ENCODE measurements at regions of chr17 and their contacts with region 1.

Region 1: GRCh38 chr17:8409966-8410864 is 12.6 kb upstream of the RNF222 start:
- DNase-seq: peak; percentile 92
- ATAC-seq: peak; percentile 88
- H3K4me3 Mint-ChIP-seq: no peak overlapping the region
- H3K27ac Mint-ChIP-seq: no peak overlapping the region
- H3K4me1 Mint-ChIP-seq: peaks cover 14% of the 10 kb centered on the region
- H3K27me3 Mint-ChIP-seq: peaks cover 2% of the 10 kb centered on the region; the same call in 1 of the 2 replicates
- CTCF ChIP-seq: peak; percentile 90

Region 2: DNA sequence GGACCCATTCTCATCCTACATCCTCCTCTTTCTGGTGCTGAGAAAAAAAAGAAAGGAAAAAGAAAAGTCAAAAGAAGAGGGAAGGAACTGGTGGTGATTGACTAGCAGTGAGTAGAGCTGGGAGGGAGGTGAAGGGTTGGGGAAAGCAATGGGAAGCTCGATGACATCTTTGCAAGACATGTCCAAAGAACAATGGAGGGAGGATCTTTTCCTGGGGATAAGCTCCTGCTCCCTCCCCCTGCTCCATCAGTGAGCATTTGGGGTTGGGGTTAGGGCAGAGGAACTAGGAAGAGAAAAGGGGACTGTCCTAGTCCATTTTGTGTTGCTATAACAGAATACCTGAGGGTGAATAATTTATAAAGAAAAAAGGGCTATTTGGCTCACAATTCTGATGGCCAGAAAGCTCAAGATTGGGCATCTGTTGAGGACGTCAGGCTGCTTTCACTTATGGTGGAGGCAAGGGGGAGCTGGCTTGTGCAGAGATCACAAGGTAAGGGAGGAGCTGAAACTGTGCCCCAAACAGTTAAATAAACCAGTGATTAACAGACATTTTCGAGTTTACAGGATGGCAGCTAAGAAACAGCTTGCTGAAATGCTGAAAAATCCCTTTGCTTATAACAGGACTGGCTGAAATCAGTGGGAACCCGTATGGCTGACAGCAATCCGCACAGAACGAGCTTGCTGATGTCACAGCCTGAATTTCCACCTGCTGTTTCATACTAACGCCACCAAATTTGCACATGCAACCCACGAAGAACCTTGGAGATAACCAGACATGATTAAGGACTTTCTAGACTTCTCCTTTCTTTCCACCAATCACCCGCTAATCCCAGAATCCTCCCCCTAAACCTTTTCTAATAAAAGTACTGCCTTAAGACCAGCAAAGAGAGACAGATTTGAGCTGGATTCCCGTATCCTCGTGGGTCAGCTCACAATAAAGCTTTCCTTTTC is 72.1 kb before region 1 on chr17:
- CTCF ChIA-PET with region 1: interaction called, 12 read pairs
- POLR2A ChIA-PET with region 1: no interaction called
- DNase-seq: no peak
- ATAC-seq: no peak
- H3K4me3 Mint-ChIP-seq: no peak overlapping the region
- H3K27ac Mint-ChIP-seq: peak overlapping the region; percentile 60
- H3K4me1 Mint-ChIP-seq: peaks cover 19% of the 10 kb centered on the region
- H3K27me3 Mint-ChIP-seq: no peaks in the 10 kb centered on the region
- CTCF ChIP-seq: no peak

Region 3: DNA sequence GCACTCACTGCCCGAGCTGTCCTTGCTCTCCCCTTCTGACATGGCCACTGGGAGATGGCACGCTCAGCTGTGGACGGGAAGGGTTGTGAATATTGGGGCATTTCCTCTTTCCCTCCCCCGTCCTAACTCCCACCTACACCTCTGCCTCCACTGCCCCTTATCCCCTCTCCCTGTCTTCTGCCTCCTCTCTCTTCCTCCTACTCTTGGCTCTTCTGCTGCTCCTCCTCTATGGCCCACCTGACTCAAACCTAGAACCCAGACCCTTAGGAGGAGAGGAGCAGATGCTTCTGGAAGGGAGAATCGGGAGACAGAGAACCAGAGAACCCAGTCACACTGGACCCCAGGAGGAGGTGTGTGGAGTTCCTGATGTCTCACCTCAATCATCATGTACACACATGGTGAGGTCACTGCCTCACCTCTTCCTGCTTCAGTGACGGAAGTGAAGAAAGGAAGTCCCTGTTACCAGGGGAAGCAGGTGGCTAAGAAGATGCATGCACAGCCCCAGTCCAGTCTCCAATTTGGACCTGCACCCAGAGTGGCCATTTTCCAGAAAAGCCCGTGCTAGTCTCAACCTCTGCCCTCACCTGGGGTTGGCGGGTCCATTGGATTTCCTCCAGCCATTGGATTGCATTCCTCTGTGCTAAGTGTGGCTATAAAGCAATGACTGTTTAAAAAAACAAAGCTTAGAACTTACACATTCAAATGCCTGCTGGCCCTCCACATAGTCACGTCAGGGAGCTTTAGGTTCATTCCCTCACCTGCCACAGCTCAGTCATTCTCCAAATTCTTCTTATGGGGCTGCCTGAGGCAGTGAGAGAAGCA is 16.6 kb before region 1 on chr17:
- CTCF ChIA-PET with region 1: interaction called, 16 read pairs
- POLR2A ChIA-PET with region 1: no interaction called
- DNase-seq: no peak
- ATAC-seq: no peak
- H3K4me3 Mint-ChIP-seq: no peak overlapping the region
- H3K27ac Mint-ChIP-seq: no peak overlapping the region
- H3K4me1 Mint-ChIP-seq: peaks cover 8% of the 10 kb centered on the region
- H3K27me3 Mint-ChIP-seq: peaks cover 13% of the 10 kb centered on the region
- CTCF ChIP-seq: no peak

Region 4: DNA sequence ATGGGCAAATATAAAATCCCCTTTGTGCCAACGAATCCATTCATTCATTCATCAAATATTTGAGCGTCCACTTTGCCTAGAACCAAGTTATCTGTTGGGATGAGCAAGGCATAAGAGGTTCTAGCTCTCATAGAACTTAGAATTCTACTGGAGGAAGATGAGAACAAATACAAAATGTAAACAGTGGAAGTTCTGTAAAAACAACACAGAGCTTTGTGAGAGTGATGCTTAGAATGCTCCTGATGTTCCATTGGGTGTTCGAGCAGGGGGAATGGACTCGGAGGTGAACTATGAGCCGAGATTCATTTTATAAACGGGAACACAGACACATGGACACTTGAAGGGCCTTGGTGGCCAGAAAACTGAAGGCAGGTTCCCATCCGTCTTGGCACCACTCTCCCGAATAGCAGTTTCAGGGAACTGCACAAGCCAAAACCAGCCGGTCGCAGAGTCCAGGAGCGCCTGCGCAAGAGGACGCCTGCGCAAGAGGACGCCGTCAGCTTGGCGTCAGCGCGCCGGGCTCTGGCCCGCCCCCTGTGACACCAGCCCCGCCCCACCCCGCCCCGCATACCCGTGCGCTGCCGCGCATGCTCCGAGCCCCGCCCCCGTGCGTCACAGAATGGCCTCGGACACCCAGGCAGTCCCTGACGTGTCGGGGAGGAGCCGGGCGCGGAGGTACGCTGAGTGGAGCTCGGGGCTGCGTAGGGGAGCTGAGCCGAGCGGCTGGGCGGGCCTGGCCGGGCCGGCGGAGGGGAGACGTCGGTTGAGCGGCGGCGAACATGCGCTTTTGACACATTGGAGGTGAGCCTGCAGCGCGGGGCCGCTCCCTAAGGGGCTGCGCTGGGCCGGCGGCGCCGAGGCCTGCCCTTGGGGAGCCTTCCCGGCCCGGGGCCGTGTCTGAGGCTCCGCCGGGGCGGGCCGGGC is 25.3 kb after region 1 on chr17 and contains the start of gene NDEL1:
- CTCF ChIA-PET with region 1: interaction called, 21 read pairs
- POLR2A ChIA-PET with region 1: no interaction called
- DNase-seq: peak; percentile 99
- ATAC-seq: peak; percentile 98
- H3K4me3 Mint-ChIP-seq: peak within 1 kb of the TSS; percentile 89
- H3K27ac Mint-ChIP-seq: peak within 1 kb of the TSS; percentile 99
- H3K4me1 Mint-ChIP-seq: peaks cover 13% of the 10 kb centered on the region
- H3K27me3 Mint-ChIP-seq: no peaks in the 10 kb centered on the region; the same call in 1 of the 2 replicates
- CTCF ChIP-seq: no peak
- total RNA-seq, gene NDEL1: 23.8 to 34.7 TPM (median 27.4 TPM) in 3 replicates

Region 5: GRCh38 chr17:8518326-8518725 is 108.1 kb after region 1 on chr17:
- CTCF ChIA-PET with region 1: no interaction called
- POLR2A ChIA-PET with region 1: no interaction called
- DNase-seq: no peak
- ATAC-seq: no peak
- H3K4me3 Mint-ChIP-seq: no peak overlapping the region
- H3K27ac Mint-ChIP-seq: no peak overlapping the region
- H3K4me1 Mint-ChIP-seq: no peaks in the 10 kb centered on the region
- H3K27me3 Mint-ChIP-seq: no peaks in the 10 kb centered on the region
- CTCF ChIP-seq: no peak

Region 6: DNA sequence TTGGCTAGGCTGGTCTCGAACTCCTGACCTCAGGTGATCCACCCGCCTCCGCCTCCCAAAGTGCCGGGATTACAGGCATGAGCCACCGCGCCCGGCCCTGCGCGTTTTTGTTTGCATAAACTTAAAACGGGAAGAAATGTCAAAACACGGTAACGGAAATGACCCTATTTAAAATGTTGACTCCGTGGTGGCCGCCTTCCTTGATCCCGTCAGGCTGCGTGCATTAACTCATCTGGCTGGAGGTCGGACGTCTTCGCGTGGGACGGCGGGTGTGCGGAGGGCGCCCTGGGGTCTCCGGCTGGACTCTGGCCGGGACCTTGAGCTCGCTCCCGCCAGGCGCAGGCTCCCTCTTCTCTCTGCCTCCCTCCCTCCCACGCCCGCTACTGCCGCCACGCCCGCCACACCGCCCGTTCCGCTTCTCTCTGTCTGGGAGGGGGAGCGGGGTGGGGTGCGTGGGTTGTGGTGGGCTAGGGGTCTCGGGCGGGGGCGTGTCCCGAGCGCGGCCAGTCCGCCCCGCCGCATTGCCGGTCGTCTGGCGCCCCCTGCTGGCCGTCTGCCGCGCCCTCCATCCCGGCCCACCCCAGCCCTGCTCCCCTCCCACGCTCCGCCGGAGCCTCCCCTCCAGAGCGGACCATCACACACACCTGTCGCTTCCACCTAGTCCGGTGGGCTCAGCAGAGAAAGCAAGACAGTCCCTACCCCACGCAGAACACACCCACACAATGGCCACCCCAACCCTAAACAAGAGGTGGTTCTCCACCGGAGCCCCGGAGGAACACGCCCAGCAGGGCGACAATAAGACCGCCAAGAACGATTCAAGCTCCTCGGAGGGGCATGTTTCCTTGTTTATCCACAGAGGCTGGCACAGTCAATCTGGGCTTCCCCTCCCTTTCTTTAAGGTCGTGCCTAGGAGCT is 335.6 kb after region 1 on chr17:
- CTCF ChIA-PET with region 1: interaction called, 17 read pairs
- POLR2A ChIA-PET with region 1: no interaction called
- DNase-seq: peak; percentile 76
- ATAC-seq: peak; percentile 83
- H3K4me3 Mint-ChIP-seq: peak overlapping the region; percentile 93
- H3K27ac Mint-ChIP-seq: no peak overlapping the region
- H3K4me1 Mint-ChIP-seq: peaks cover 4% of the 10 kb centered on the region; the same call in 1 of the 2 replicates
- H3K27me3 Mint-ChIP-seq: no peaks in the 10 kb centered on the region; the same call in 1 of the 2 replicates
- CTCF ChIP-seq: peak; percentile 99